ENCODE measurements at regions of chr10 and their contacts with region 1.

Region 1: DNA sequence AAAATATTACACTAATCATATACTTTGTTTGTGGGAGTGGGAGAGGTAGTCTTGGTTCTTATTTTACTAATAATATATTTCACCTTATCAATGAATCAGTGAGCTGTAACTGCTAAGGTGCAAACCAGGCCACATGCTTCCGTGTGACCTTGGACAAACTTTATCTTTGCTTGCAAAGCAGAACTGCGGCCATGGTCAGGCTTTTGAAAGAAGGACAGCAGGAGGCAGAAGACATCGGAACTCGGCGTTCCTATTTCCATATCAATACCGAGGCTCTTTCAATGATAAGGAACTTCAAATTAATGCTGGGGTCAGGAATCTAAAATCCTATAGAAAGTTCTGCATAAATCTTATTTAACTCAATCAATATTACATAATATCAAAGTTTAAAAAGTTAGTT is 491.9 kb upstream of the PFKP start:
- DNase-seq: no peak
- H3K4me3 ChIP-seq: no peak overlapping the region
- CTCF ChIP-seq: no peak
- POLR2A ChIP-seq: no peak

Region 2: DNA sequence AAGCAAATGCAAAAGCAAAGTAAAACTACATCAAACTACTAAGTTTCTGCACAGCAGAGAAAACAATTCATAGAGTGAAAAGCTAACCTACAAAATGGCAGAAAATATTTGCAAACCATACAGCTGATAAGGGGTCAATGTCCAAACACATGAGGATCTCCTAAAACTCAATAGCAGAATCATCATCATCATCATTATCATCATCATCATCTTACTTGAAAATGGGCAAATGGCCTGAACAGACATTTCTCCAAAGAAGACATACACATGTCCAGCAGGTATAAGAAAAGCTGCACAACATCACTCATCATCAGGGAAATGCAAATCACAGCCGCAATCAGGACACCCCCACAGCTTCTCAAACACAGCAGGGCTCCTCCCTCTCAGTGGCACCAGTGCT is 57.6 kb before region 1 on chr10:
- intact Hi-C with region 1: loop called (anchors 2 kb)
- DNase-seq: no peak
- H3K4me3 ChIP-seq: no peak overlapping the region
- CTCF ChIP-seq: no peak
- POLR2A ChIP-seq: no peak

Region 3: DNA sequence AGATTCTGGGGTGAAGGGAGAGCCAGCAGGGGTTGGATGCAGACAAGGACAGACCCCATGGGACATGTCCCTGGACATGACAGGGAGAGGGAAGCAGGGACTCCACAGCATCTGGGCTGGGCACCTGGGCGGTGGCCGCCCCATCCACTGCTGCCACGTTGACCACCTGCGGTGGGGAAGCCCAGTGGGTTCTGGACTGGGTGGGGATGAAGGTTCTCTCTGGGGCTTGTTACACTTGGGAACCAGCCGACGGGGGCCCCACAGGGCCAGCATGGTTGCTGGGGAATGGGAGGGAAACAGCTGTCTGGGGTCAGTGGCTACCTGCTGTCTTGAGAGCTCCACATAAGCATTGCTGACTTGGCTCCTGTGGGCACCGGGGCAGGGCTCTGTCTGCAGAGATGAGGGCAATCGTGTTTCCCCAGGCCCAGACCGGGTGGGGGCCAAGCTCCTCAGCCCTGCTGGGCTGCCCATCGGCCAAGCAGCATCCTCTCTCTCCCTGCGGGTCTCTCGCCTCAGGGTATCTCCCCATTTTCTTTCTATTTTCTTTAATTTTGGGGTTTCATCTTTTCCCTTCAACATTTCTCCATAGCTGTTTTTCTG is 48.3 kb after region 1 on chr10:
- intact Hi-C with region 1: no loop called
- DNase-seq: no peak
- H3K4me3 ChIP-seq: no peak overlapping the region
- CTCF ChIP-seq: no peak
- POLR2A ChIP-seq: no peak

Measured in lower leg skin (tissue), 4 donors.